ENCODE measurements at regions of chr6 and their contacts with region 1.

Region 1: GRCh38 chr6:92647625-92648024 is 771.7 kb downstream of the EPHA7 start:
- DNase-seq: peak; percentile 18
- ATAC-seq: no peak
- H3K4me3 ChIP-seq: no peak overlapping the region
- H3K27ac ChIP-seq: no peak overlapping the region
- H3K4me1 ChIP-seq: no peaks in the 10 kb centered on the region
- H3K27me3 ChIP-seq: no peaks in the 10 kb centered on the region
- CTCF ChIP-seq: no peak

Region 2: GRCh38 chr6:91330896-91331295 is 1316.7 kb before region 1 on chr6:
- CTCF ChIA-PET with region 1: no interaction called
- POLR2A ChIA-PET with region 1: no interaction called
- intact Hi-C with region 1: loop called (anchors 2 kb)
- DNase-seq: no peak
- ATAC-seq: no peak
- H3K4me3 ChIP-seq: no peak overlapping the region
- H3K27ac ChIP-seq: no peak overlapping the region
- H3K4me1 ChIP-seq: no peaks in the 10 kb centered on the region
- H3K27me3 ChIP-seq: no peaks in the 10 kb centered on the region
- CTCF ChIP-seq: no peak

Region 3: DNA sequence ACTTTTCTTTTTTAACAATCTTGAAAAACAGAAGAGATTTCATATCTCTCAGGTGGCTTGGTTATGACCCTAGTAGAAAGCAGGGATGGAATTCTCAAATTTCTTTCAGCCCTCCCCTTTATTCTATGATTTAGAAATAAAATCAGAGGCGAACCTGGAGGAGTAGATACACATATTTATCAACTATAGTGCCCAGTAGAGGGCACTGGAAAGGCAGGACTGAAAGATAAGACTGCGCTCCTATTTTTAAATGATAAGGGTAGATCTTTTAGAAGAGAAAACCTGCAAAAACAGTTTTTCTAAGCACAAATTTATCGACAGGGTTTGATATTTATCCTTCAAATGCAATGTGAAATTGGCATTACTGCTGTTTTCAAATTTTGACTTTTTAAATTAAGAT is 524.9 kb before region 1 on chr6:
- CTCF ChIA-PET with region 1: no interaction called
- POLR2A ChIA-PET with region 1: no interaction called
- intact Hi-C with region 1: loop called (anchors 1 kb)
- DNase-seq: peak; percentile 31
- ATAC-seq: no peak
- H3K4me3 ChIP-seq: no peak overlapping the region
- H3K27ac ChIP-seq: no peak overlapping the region
- H3K4me1 ChIP-seq: peaks cover 16% of the 10 kb centered on the region
- H3K27me3 ChIP-seq: no peaks in the 10 kb centered on the region
- CTCF ChIP-seq: peak; percentile 62

Region 4: GRCh38 chr6:92341224-92341623 is 306.4 kb before region 1 on chr6:
- CTCF ChIA-PET with region 1: no interaction called
- POLR2A ChIA-PET with region 1: no interaction called
- intact Hi-C with region 1: loop called (anchors 1 kb)
- DNase-seq: peak; percentile 67
- ATAC-seq: peak; percentile 54
- H3K4me3 ChIP-seq: no peak overlapping the region
- H3K27ac ChIP-seq: no peak overlapping the region
- H3K4me1 ChIP-seq: peaks cover 22% of the 10 kb centered on the region; the same call in 1 of the 2 replicates
- H3K27me3 ChIP-seq: no peaks in the 10 kb centered on the region
- CTCF ChIP-seq: no peak

Region 5: GRCh38 chr6:92979281-92979680 is 331.7 kb after region 1 on chr6:
- CTCF ChIA-PET with region 1: no interaction called
- POLR2A ChIA-PET with region 1: no interaction called
- intact Hi-C with region 1: no loop called
- DNase-seq: no peak
- ATAC-seq: no peak
- H3K4me3 ChIP-seq: no peak overlapping the region
- H3K27ac ChIP-seq: no peak overlapping the region
- H3K4me1 ChIP-seq: 0 out of 2 replicates have a peak, but pooled peaks cover 4% of the 10 kb centered on the region
- H3K27me3 ChIP-seq: no peaks in the 10 kb centered on the region
- CTCF ChIP-seq: no peak